Activated CD4-positive, alpha-beta memory T cell treated with anti-CD3 and anti-CD28 coated beads, Interleukin-2, amount 10 ng/mL, durations not matched to agents 7 days and 5 days (primary cell): ENCODE measurements at regions of chr6 and their contacts with region 1.

Region 1: GRCh38 chr6:1609648-1610496 is at the start of gene FOXC1:
- DNase-seq: peak; percentile 52
- H3K4me3 Mint-ChIP-seq: peak within 1 kb of the TSS; percentile 59
- H3K27ac Mint-ChIP-seq: no peak within 1 kb of the TSS
- H3K4me1 Mint-ChIP-seq: peaks cover 40% of the 10 kb centered on the region
- H3K27me3 Mint-ChIP-seq: peaks cover 65% of the 10 kb centered on the region
- total RNA-seq, gene FOXC1: 0.08 TPM in 1 of 2 experiments, not detected in the other

Region 2: GRCh38 chr6:1596088-1596852 is 13.6 kb before region 1 on chr6:
- CTCF ChIA-PET with region 1: interaction called, 15 read pairs
- POLR2A ChIA-PET with region 1: interaction called, 3 read pairs
- DNase-seq: peak; percentile 66
- H3K4me3 Mint-ChIP-seq: no peak overlapping the region
- H3K27ac Mint-ChIP-seq: no peak overlapping the region
- H3K4me1 Mint-ChIP-seq: peaks cover 3% of the 10 kb centered on the region
- H3K27me3 Mint-ChIP-seq: peaks cover 62% of the 10 kb centered on the region